CD4-positive, alpha-beta T cell (primary cell): ENCODE measurements at regions of chr1 and their contacts with region 1.

Region 1: GRCh38 chr1:52127181-52128180 is 14.4 kb upstream of the ZFYVE9 start:
- DNase-seq: peak in 5 of 14 experiments; percentile 7 to 63 (median 54)
- ATAC-seq: peak; percentile 41
- H3K4me3 ChIP-seq: no peak overlapping the region
- H3K4me3 Mint-ChIP-seq: no peak overlapping the region
- H3K27ac ChIP-seq: no peak overlapping the region
- H3K27ac Mint-ChIP-seq: no peak overlapping the region
- H3K4me1 ChIP-seq: no peaks in the 10 kb centered on the region
- H3K4me1 Mint-ChIP-seq: no peaks in the 10 kb centered on the region
- H3K27me3 ChIP-seq: no peaks in the 10 kb centered on the region
- H3K27me3 Mint-ChIP-seq: peaks cover 22% of the 10 kb centered on the region
- CTCF ChIP-seq: peak; percentile 75

Region 2: DNA sequence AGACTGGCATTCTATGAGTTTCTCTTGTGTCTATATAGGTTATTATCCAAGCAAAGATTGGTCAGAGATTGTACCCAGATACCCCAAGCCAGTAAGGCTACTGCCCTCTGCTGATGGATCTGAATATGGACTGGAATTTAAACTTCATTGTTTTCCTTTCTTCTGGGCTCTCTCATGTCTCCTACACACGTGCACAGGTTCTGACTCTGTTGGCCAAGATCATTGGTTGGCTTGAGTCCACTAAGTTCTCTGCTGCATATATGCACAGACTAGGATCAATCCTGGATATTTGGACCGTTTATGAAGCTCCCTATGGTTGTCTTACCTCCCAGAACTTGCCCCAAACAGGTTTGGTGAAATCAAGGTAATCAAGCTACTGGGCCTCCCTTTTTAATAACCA is 168.9 kb after region 1 on chr1:
- CTCF ChIA-PET with region 1: interaction called, 3 read pairs
- POLR2A ChIA-PET with region 1: no interaction called
- intact Hi-C with region 1: loop called (anchors 1 kb)
- DNase-seq: peak in 3 of 14 experiments; percentile 42 to 49 (median 44)
- ATAC-seq: peak; percentile 41
- H3K4me3 ChIP-seq: no peak overlapping the region
- H3K4me3 Mint-ChIP-seq: no peak overlapping the region
- H3K27ac ChIP-seq: no peak overlapping the region
- H3K27ac Mint-ChIP-seq: no peak overlapping the region
- H3K4me1 ChIP-seq: no peaks in the 10 kb centered on the region
- H3K4me1 Mint-ChIP-seq: no peaks in the 10 kb centered on the region
- H3K27me3 ChIP-seq: no peaks in the 10 kb centered on the region
- H3K27me3 Mint-ChIP-seq: no peaks in the 10 kb centered on the region
- CTCF ChIP-seq: peak; percentile 70

Region 3: GRCh38 chr1:52769346-52770033 is 642.0 kb after region 1 on chr1:
- CTCF ChIA-PET with region 1: no interaction called
- POLR2A ChIA-PET with region 1: no interaction called
- intact Hi-C with region 1: loop called in 1 of 2 experiments (anchors 10 kb)
- DNase-seq: no peak
- ATAC-seq: no peak
- H3K4me3 ChIP-seq: no peak overlapping the region
- H3K4me3 Mint-ChIP-seq: no peak overlapping the region
- H3K27ac ChIP-seq: no peak overlapping the region
- H3K27ac Mint-ChIP-seq: no peak overlapping the region
- H3K4me1 ChIP-seq: peaks cover 4% of the 10 kb centered on the region
- H3K4me1 Mint-ChIP-seq: peaks cover 23% of the 10 kb centered on the region
- H3K27me3 ChIP-seq: no peaks in the 10 kb centered on the region
- H3K27me3 Mint-ChIP-seq: no peaks in the 10 kb centered on the region
- CTCF ChIP-seq: no peak